SK-N-SH (cell line): ENCODE measurements at regions of chr15 and their contacts with region 1.

Region 1: GRCh38 chr15:51776952-51777574 is 25.7 kb downstream of the TMOD2 start:
- DNase-seq: peak; percentile 66
- H3K4me3 ChIP-seq: no peak overlapping the region
- H3K27ac ChIP-seq: no peak overlapping the region
- H3K4me1 ChIP-seq: peaks cover 0 to 3% of the 10 kb centered on the region in 2 experiments; a peak in 1 of 4 replicates
- H3K27me3 ChIP-seq: no peaks in the 10 kb centered on the region
- CTCF ChIP-seq: peak; percentile 83
- EP300 ChIP-seq: no peak
- RAD21 ChIP-seq: peak; percentile 77

Region 2: DNA sequence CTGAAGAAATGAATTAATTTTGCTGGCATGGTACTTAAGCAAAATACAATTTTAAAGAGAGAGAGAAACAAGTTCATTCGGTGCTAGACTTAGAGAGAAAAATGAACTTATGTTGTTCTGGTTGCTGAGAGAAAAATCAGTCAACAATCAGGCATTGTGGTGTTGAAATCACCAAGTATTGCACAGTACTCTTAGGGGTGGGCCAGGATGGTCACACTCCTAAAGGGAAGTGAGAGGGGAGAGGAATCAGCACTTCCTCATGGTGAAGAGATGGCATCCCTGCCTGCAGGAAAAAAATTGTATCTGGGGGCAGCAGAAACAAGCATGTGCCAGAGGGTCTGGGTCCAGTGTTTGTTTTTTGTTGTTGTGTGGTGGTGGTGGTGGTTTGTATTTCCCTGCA is 147.5 kb before region 1 on chr15:
- CTCF ChIA-PET with region 1: interaction called, 16 read pairs
- POLR2A ChIA-PET with region 1: no interaction called
- DNase-seq: no peak
- H3K4me3 ChIP-seq: no peak overlapping the region
- H3K27ac ChIP-seq: no peak overlapping the region
- H3K4me1 ChIP-seq: no peaks in the 10 kb centered on the region; a peak in 1 of 4 replicates
- H3K27me3 ChIP-seq: no peaks in the 10 kb centered on the region
- CTCF ChIP-seq: no peak
- EP300 ChIP-seq: no peak
- RAD21 ChIP-seq: no peak

Region 3: DNA sequence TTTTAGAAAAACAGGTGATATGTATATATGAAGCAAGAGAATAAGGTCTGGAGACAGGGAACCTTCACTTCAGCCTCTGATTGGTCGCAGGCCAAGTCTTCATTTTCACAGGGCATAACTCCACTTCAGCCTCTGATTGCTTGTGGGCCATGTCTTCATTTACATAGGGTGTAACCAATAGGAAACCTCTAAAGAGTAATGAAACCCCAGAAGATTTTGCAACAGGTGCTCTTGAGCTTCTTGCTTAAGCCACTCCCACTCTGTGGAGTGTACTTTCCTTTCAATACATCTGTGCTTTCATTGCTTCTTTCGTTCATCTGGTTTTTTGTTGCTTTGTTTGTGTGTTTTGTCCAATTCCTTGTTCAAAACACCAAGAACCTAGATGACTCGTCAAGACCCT is 118.4 kb before region 1 on chr15:
- CTCF ChIA-PET with region 1: interaction called, 50 read pairs
- POLR2A ChIA-PET with region 1: no interaction called
- DNase-seq: no peak
- H3K4me3 ChIP-seq: no peak overlapping the region
- H3K27ac ChIP-seq: no peak overlapping the region
- H3K4me1 ChIP-seq: no peaks in the 10 kb centered on the region
- H3K27me3 ChIP-seq: no peaks in the 10 kb centered on the region; the same call in none of the 2 replicates
- CTCF ChIP-seq: no peak
- EP300 ChIP-seq: no peak
- RAD21 ChIP-seq: no peak

Region 4: GRCh38 chr15:51692154-51692553 is 84.9 kb before region 1 on chr15:
- CTCF ChIA-PET with region 1: interaction called, 16 read pairs
- POLR2A ChIA-PET with region 1: no interaction called
- DNase-seq: no peak
- H3K4me3 ChIP-seq: no peak overlapping the region
- H3K27ac ChIP-seq: no peak overlapping the region
- H3K4me1 ChIP-seq: no peaks in the 10 kb centered on the region
- H3K27me3 ChIP-seq: peaks cover 10% of the 10 kb centered on the region; the same call in 1 of the 2 replicates
- CTCF ChIP-seq: no peak
- EP300 ChIP-seq: no peak
- RAD21 ChIP-seq: no peak

Region 5: DNA sequence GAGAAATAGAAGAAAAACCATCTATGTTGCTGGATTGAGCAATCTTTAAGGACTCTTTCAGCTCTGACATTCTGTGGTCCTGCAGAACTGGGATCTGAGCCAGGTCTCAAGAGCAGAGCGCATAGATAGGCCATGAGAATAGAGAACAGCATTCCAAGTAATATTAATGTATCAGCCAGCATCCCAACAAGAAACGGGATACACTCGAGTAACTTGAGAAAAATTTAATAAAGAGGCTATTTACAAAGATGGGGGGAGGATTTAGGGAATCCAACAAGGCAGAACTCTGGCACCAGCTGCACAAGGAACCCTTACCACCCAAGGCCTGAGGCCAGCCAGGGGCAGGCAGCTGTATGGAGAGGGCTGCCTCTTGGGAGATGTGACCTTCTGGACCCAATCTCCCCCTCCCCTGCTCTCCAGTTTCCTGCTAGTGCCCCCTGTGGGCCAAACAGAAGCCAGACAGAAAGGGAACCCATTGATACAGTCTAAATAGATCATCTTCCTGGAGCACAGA is 17.4 kb before region 1 on chr15:
- CTCF ChIA-PET with region 1: interaction called, 51 read pairs
- POLR2A ChIA-PET with region 1: no interaction called
- DNase-seq: no peak
- H3K4me3 ChIP-seq: no peak overlapping the region
- H3K27ac ChIP-seq: peak overlapping the region; percentile 80 to 82
- H3K4me1 ChIP-seq: peaks cover 11 to 18% of the 10 kb centered on the region in 2 experiments
- H3K27me3 ChIP-seq: no peaks in the 10 kb centered on the region
- CTCF ChIP-seq: peak; percentile 66
- EP300 ChIP-seq: peak; percentile 6 to 79; a peak in 2 of 4 replicates
- RAD21 ChIP-seq: peak; percentile 33; the same call in 1 of the 2 replicates

Region 6: GRCh38 chr15:51842852-51843737 is 66.0 kb after region 1 on chr15:
- CTCF ChIA-PET with region 1: interaction called, 10 read pairs
- POLR2A ChIA-PET with region 1: no interaction called
- DNase-seq: no peak
- H3K4me3 ChIP-seq: no peak overlapping the region
- H3K27ac ChIP-seq: peak overlapping the region in 1 of 2 experiments; percentile 97; a peak in 2 of 4 replicates
- H3K4me1 ChIP-seq: peaks cover 5 to 61% of the 10 kb centered on the region in 2 experiments
- H3K27me3 ChIP-seq: no peaks in the 10 kb centered on the region
- CTCF ChIP-seq: no peak
- EP300 ChIP-seq: no peak
- RAD21 ChIP-seq: no peak

Region 7: DNA sequence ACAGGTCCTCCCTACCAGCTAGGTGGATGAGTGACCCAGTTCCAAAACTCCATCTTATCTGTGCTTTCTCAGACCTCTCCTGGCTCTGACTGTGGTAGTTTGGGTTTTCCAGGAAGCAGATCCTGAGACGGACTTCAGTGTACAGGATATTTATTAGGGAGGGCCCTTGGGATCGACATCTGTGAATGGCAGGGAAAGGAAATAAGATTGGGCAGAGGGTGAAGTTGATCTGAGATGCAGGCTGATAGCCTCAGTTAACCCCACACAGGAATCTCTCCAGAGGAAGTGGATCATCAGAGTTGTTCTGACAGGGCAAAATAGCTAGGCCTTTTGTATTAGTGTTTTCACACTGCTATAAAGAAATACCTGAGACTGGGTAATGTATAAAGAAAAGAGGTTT is 225.3 kb after region 1 on chr15:
- CTCF ChIA-PET with region 1: no interaction called
- POLR2A ChIA-PET with region 1: no interaction called
- DNase-seq: no peak
- H3K4me3 ChIP-seq: no peak overlapping the region
- H3K27ac ChIP-seq: no peak overlapping the region
- H3K4me1 ChIP-seq: peaks cover 0 to 4% of the 10 kb centered on the region in 2 experiments; a peak in 2 of 4 replicates
- H3K27me3 ChIP-seq: no peaks in the 10 kb centered on the region
- CTCF ChIP-seq: no peak
- EP300 ChIP-seq: no peak
- RAD21 ChIP-seq: no peak

Region 8: DNA sequence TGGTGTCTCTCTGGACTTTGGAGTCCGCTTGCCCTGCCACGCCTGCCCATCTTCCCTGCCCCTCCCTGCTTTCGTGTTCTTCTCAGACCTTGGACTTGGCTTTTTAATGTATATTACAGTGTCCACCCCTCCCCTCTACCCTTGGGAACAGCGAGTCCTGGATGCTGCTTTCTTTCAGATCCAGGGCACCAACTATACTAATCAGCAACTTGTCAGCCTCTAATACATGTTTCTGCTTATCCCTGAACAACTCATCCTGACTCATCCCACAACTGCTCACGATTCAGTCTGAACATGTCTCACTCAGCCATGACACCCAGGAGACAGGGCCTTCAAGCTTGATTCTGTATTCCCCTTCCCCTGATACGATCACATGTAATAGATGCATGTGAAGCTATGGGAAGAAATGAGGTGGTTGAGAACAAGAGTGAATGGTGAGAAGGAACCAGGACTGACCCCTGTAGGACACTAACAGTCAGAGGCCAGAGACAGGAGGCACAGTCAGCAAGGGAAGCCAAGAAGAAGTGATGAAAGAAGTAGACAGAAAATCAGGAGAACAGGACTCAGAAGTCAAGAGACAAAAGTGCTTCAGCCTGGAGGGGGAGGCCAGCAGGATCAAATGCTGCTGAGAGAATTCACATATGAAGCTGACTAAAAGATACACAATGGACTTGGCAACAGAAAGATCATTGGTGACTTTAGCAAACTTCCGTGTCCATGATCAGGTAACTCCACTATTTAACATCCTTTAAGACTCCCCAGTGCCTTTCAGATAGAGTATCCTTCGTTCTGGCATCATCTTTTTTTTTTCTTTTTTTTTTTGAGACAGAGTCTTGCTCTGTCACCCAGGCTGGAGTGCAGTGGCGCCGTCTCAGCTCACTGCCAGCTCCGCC is 300.1 kb after region 1 on chr15:
- CTCF ChIA-PET with region 1: no interaction called
- POLR2A ChIA-PET with region 1: no interaction called
- DNase-seq: no peak
- H3K4me3 ChIP-seq: no peak overlapping the region
- H3K27ac ChIP-seq: peak overlapping the region in 1 of 2 experiments; percentile 79; a peak in 3 of 4 replicates
- H3K4me1 ChIP-seq: peaks cover 0 to 12% of the 10 kb centered on the region in 2 experiments; a peak in 1 of 4 replicates
- H3K27me3 ChIP-seq: no peaks in the 10 kb centered on the region
- CTCF ChIP-seq: no peak; the same call in 1 of the 2 replicates
- EP300 ChIP-seq: peak in 1 of 2 experiments; percentile 64; a peak in 1 of 4 replicates
- RAD21 ChIP-seq: no peak